Psoas muscle (tissue), 8 donors: ENCODE measurements at regions of chrX and their contacts with region 1.

Region 1: DNA sequence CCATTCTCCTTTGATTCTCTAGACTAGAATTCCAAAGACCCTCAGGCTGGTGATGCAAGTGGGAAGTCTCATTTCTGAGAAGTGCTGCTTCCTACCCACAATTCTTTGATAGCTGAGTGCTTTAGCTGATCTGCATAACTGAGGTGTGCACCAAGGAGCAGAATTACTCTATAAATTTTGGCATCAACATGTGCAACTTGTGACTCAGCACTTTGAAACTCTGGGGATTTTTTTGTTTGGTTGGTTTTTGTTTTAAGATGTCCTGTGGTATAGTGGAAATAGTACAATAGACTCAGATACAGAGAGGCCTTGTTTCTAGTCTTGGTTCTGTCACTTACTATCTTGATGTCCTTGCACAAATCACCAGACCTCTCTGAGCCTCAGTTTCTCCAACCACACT is 148.4 kb downstream of the AR start:
- DNase-seq: no peak
- ATAC-seq: no peak
- H3K4me3 ChIP-seq: no peak overlapping the region
- H3K27ac ChIP-seq: no peak overlapping the region
- H3K4me1 ChIP-seq: no peaks in the 10 kb centered on the region
- H3K27me3 ChIP-seq: peaks cover 0 to 7% (median 0%) of the 10 kb centered on the region in 3 donors
- CTCF ChIP-seq: no peak

Region 2: DNA sequence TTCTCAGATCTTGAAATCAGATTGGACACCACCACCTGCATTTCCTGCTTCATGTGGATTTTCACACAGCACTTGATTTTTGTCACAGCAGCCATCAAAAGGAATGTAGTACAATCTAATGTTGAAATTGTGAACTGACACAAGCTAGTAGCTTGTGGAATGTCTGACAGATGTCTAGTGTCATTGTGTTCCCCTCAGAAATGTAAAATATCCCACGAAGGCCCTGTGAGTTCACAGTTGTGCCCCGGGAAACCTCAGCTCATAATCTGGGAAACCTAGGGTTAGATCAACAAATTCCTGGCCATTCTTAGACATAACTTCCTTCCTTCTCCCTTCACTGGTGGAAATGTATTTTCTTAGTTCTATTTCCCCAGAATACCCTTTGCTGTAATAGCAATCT is 57.3 kb after region 1 on chrX:
- intact Hi-C with region 1: loop called in 1 of 2 experiments (anchors 5 kb)
- DNase-seq: no peak
- ATAC-seq: no peak
- H3K4me3 ChIP-seq: no peak overlapping the region
- H3K27ac ChIP-seq: no peak overlapping the region
- H3K4me1 ChIP-seq: no peaks in the 10 kb centered on the region
- H3K27me3 ChIP-seq: no peaks in the 10 kb centered on the region
- CTCF ChIP-seq: no peak